Panc1 (cell line): ENCODE measurements at regions of chr13 and their contacts with region 1.

Region 1: DNA sequence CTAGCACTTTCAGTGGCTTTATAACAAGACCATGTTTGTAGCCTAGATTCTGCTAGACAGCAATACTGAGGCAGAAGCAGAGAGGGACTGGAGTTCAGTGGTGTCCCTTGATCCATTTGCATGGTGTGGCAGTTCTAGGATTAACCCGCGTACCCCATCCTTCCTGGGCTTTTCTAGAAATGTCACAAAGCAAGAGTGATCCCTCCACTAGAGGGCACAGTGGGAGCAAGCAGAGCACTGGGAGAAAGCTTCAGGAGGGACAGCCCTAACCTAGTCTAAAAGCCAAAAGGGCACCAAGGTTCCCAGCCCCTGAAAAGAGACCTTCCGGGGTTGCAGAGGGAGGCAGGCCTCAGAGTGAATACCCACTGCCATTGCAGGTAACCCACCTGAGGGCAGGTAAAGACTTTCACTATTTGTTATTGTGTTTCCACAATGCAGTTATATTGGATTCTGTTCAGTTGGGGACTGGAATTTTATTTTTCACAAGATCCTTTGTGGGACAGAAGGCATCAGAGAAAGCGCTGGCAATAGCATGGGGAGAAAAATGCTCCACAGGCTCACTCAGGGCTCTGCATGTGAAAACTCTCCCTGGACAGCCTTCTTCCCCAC is 170.6 kb downstream of the FLT1 start:
- DNase-seq: peak; percentile 12
- ATAC-seq: peak; percentile 85
- H3K4me3 ChIP-seq: no peak overlapping the region
- H3K27ac ChIP-seq: no peak overlapping the region
- H3K4me1 ChIP-seq: no peaks in the 10 kb centered on the region
- H3K27me3 ChIP-seq: no peaks in the 10 kb centered on the region
- CTCF ChIP-seq: peak; percentile 81

Region 2: GRCh38 chr13:28636674-28637317 is 312.5 kb after region 1 on chr13:
- CTCF ChIA-PET with region 1: no interaction called
- POLR2A ChIA-PET with region 1: no interaction called
- in situ Hi-C with region 1: no loop called
- intact Hi-C with region 1: loop called (anchors 5 kb)
- DNase-seq: peak; percentile 25
- ATAC-seq: peak; percentile 66; the same call in 1 of the 2 replicates
- H3K4me3 ChIP-seq: no peak overlapping the region
- H3K27ac ChIP-seq: no peak overlapping the region
- H3K4me1 ChIP-seq: no peaks in the 10 kb centered on the region
- H3K27me3 ChIP-seq: no peaks in the 10 kb centered on the region; the same call in 1 of the 2 replicates
- CTCF ChIP-seq: peak; percentile 86

Region 3: DNA sequence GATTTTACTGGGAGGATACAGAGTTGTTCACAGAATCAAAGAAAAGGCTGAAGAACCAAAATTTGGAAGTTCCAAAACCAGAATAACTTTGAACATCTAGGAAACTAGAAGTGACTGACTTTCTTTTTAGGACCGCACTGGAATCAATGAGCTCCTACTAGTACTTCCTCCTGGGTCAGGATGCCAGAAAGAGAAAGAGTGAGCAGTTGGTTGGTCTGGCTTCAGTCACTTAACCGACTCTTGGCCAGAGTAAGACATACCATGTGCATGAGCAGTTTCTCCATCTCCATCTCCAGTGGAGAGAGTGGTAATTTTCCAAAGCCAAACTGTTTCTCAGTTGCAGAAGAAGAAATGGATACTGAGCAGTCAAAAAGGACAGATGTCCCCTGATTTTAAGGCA is 468.7 kb after region 1 on chr13:
- CTCF ChIA-PET with region 1: no interaction called
- POLR2A ChIA-PET with region 1: no interaction called
- in situ Hi-C with region 1: no loop called
- intact Hi-C with region 1: loop called (anchors 10 kb)
- DNase-seq: no peak
- ATAC-seq: no peak
- H3K4me3 ChIP-seq: no peak overlapping the region
- H3K27ac ChIP-seq: no peak overlapping the region
- H3K4me1 ChIP-seq: no peaks in the 10 kb centered on the region; the same call in 1 of the 2 replicates
- H3K27me3 ChIP-seq: no peaks in the 10 kb centered on the region
- CTCF ChIP-seq: no peak

Region 4: GRCh38 chr13:29239653-29240525 is 915.6 kb after region 1 on chr13:
- CTCF ChIA-PET with region 1: no interaction called
- POLR2A ChIA-PET with region 1: interaction called, 18 read pairs
- in situ Hi-C with region 1: no loop called
- intact Hi-C with region 1: no loop called
- DNase-seq: no peak
- ATAC-seq: no peak
- H3K4me3 ChIP-seq: no peak overlapping the region
- H3K27ac ChIP-seq: no peak overlapping the region
- H3K4me1 ChIP-seq: no peaks in the 10 kb centered on the region
- H3K27me3 ChIP-seq: no peaks in the 10 kb centered on the region
- CTCF ChIP-seq: no peak